ENCODE measurements at regions of chr4 and their contacts with region 1.

Region 1: GRCh38 chr4:143346206-143346605 is 9.5 kb downstream of the GAB1 start:
- DNase-seq: no peak
- ATAC-seq: no peak
- H3K4me3 ChIP-seq: no peak overlapping the region
- H3K27ac ChIP-seq: no peak overlapping the region
- H3K4me1 ChIP-seq: no peaks in the 10 kb centered on the region
- H3K27me3 ChIP-seq: no peaks in the 10 kb centered on the region
- CTCF ChIP-seq: no peak
- EP300 ChIP-seq: no peak
- POLR2A ChIP-seq: no peak
- RAD21 ChIP-seq: no peak

Region 2: DNA sequence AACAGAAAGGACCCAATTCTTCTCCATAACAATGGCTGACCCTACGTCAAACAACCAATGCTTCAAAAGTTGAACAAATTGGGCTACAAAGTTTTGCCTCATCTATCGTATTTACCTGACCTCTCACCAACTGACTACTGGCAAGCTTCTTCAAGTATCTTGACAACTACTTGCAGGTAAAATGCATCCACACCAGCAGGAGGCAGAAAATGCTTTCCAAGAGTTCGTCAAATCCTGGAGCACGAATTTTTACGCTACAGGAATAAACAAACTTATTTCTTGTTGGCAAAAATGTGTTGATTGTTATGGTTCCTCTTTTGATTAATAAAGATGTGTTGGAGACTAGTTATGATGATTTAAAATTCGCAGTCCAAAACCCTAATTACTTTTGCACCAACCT is 16.2 kb before region 1 on chr4:
- CTCF ChIA-PET with region 1: no interaction called
- POLR2A ChIA-PET with region 1: interaction called, 9 read pairs
- RAD21 ChIA-PET with region 1: interaction called, 3 read pairs
- SMC1A ChIA-PET with region 1: interaction called, 10 read pairs
- in situ Hi-C with region 1: no loop called
- intact Hi-C with region 1: no loop called
- DNase-seq: no peak
- ATAC-seq: no peak
- H3K4me3 ChIP-seq: no peak overlapping the region
- H3K27ac ChIP-seq: no peak overlapping the region
- H3K4me1 ChIP-seq: no peaks in the 10 kb centered on the region
- H3K27me3 ChIP-seq: 0 out of 4 replicates have a peak, but pooled peaks cover 0 to 3% of the 10 kb centered on the region in 2 experiments
- CTCF ChIP-seq: no peak
- EP300 ChIP-seq: no peak
- POLR2A ChIP-seq: no peak
- RAD21 ChIP-seq: no peak

Region 3: DNA sequence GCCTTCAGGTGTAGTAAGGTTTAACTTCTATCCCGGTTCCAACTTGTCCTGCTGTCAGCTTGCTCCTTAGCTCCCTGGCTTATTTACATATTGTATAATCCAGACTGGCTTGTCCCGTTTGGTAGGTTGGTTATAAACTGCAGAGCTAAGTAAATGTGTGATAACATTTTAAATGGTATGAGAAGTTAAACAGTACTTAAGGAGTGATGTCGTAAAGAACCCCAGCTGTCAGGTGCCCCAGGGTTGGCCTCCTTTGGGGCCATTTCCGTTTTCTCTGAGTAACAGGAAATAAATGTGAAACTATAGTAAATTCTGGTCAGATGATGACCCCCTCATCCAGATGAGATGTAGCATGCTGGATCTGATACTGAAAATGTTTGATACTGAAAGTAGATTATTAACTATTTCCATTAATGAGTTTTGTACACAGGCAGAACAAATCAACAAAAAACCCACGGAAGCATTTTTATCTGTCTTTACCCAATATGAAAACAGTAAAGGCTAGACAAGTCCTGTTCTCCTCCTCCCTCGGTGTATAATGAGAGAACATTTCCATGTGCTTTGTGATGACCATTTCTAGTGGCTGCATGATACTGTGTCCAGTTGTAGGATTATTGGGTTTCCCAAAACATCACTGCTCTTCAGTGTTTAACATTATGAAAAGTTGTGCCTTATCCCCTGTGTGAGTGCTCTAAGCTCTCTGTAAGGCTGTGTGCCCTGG is 12.9 kb after region 1 on chr4:
- CTCF ChIA-PET with region 1: interaction called, 9 read pairs
- POLR2A ChIA-PET with region 1: interaction called, 94 read pairs
- RAD21 ChIA-PET with region 1: interaction called, 61 read pairs
- SMC1A ChIA-PET with region 1: interaction called, 62 read pairs
- in situ Hi-C with region 1: no loop called
- intact Hi-C with region 1: no loop called
- DNase-seq: no peak
- ATAC-seq: peak; percentile 83
- H3K4me3 ChIP-seq: no peak overlapping the region
- H3K27ac ChIP-seq: peak overlapping the region; percentile 66
- H3K4me1 ChIP-seq: peaks cover 21% of the 10 kb centered on the region
- H3K27me3 ChIP-seq: no peaks in the 10 kb centered on the region
- CTCF ChIP-seq: no peak
- EP300 ChIP-seq: peak; percentile 41 to 67; a peak in 2 of 4 replicates
- POLR2A ChIP-seq: no peak
- RAD21 ChIP-seq: no peak